ENCODE measurements at regions of chr12 and their contacts with region 1.

Region 1: GRCh38 chr12:32312049-32312670 is 87.2 kb upstream of the FGD4 start:
- DNase-seq: no peak
- H3K4me3 Mint-ChIP-seq: no peak overlapping the region
- H3K27ac Mint-ChIP-seq: no peak overlapping the region
- H3K4me1 Mint-ChIP-seq: peaks cover 5% of the 10 kb centered on the region
- H3K27me3 Mint-ChIP-seq: no peaks in the 10 kb centered on the region

Region 2: GRCh38 chr12:32106517-32107358 is 205.4 kb before region 1 on chr12 and contains the start of gene BICD1:
- intact Hi-C with region 1: loop called (anchors 1 kb)
- DNase-seq: peak; percentile 76
- H3K4me3 Mint-ChIP-seq: peak within 1 kb of the TSS; percentile 98
- H3K27ac Mint-ChIP-seq: peak within 1 kb of the TSS; percentile 87
- H3K4me1 Mint-ChIP-seq: peaks cover 36% of the 10 kb centered on the region
- H3K27me3 Mint-ChIP-seq: peaks cover 19% of the 10 kb centered on the region
- total RNA-seq, gene BICD1: 20.9 and 22.2 TPM in 2 replicates

Measured in activated T-helper 1 cell treated with anti-CD3 and anti-CD28 coated beads, Interleukin-12 subunit alpha, Interleukin-12 subunit beta, Interleukin-2, Interleukin-4 antibody, amounts not matched to agents 30 ng/mL and 10 ng/mL and 1 ng/mL, durations not matched to agents 14 hours and 24 hours and 36 hours (primary cell).